ENCODE measurements at regions of chr1 and their contacts with region 1.

Region 1: DNA sequence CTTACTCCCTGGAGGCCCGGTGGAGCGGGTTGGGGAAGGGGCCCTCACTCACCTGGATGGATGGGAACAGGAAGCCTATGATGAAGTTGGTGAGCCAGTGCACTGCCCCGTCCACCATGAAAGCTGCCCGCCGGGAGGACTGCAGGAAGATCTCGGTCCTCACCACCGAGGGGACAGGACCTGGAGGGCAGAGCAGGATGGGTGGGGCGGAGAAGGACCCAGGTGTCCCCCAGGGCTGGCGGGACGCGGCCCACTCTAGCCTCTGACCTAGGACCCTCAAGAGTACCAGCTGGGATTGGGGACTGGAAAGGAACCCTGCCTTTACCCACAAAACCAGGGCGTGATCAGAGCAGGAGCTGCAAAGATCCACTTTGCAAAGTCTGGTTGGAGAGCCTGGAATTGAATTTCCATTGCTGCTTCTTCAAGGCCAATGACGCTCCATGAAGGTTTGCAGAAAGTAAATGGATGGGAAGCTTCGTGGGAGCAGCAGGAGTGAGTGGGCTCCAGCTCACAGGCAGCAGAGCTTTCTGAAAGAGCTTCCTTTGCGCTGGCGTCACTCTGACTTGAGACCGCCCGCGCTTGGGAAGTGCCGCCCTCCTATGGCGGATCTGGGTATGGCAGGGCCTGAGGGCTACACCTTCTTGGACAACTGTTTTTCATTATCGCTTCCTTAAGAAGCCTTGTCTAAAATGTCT is 21.4 kb downstream of the SLC2A7 start:
- DNase-seq: peak; percentile 75
- H3K4me3 Mint-ChIP-seq: no peak overlapping the region
- H3K27ac Mint-ChIP-seq: no peak overlapping the region
- H3K4me1 Mint-ChIP-seq: peaks cover 2% of the 10 kb centered on the region
- H3K27me3 Mint-ChIP-seq: no peaks in the 10 kb centered on the region

Region 2: GRCh38 chr1:8913111-8913856 is 91.6 kb before region 1 on chr1:
- intact Hi-C with region 1: loop called (anchors 1 kb)
- DNase-seq: no peak
- H3K4me3 Mint-ChIP-seq: no peak overlapping the region
- H3K27ac Mint-ChIP-seq: no peak overlapping the region
- H3K4me1 Mint-ChIP-seq: peaks cover 13% of the 10 kb centered on the region
- H3K27me3 Mint-ChIP-seq: no peaks in the 10 kb centered on the region

Region 3: DNA sequence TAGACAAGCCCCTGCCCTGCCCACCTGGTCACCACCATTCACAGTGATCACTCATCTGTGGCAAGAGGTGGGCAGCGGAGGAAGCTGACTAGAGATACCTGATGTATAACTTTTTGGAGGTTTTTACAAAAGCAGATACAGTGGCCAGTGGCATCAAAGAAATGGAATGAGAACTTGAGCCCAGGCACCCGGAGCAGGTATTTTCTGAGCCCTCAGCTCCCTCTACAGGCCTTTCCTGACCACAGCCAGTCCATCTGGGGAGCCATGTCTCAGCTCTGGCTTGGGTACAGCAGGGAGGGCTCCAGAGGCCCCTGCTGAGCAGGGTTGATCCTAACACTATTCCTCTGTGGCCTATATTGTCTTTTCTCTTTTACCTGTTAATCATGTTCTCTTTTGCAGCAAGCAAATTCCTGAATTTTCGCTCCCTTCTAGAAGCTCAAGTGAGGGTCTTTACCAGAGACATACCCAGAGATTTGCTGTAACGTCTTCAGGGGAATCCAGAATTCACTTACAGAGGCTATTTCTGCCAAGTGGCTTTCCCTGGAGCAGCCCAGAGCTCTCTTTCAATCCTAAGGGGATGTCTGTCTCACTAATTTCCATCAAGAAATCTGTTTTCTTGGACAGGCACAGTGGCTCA is 96.8 kb after region 1 on chr1:
- intact Hi-C with region 1: loop called (anchors 5 kb)
- DNase-seq: no peak
- H3K4me3 Mint-ChIP-seq: no peak overlapping the region
- H3K27ac Mint-ChIP-seq: no peak overlapping the region
- H3K4me1 Mint-ChIP-seq: peaks cover 2% of the 10 kb centered on the region
- H3K27me3 Mint-ChIP-seq: no peaks in the 10 kb centered on the region